ENCODE measurements at regions of chr5 and their contacts with region 1.

Region 1: DNA sequence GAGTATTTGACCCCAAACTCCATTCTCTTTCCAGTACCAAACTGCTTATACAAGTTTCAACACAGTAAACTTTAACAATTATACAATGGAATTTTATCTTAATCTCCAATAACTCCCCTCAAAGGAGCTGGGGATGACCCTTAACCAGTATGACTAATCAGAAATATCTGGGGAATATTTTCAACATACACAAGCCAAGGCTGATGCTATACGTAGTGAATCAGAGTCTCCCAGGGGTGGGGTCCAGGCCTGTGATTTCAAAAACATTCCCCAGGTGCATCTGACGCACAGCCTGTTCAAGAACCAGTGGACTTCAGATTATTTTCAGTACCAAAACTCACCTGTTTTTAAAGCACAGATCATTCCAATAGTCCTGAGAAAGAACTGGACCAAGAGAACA is 11.8 kb upstream of the SEMA5A start:
- DNase-seq: no peak
- ATAC-seq: no peak
- H3K4me3 ChIP-seq: no peak overlapping the region
- H3K27ac ChIP-seq: no peak overlapping the region
- H3K4me1 ChIP-seq: no peaks in the 10 kb centered on the region
- H3K27me3 ChIP-seq: no peaks in the 10 kb centered on the region
- CTCF ChIP-seq: no peak

Region 2: GRCh38 chr5:9468060-9468388 is 89.7 kb before region 1 on chr5:
- intact Hi-C with region 1: no loop called
- DNase-seq: no peak
- ATAC-seq: no peak
- H3K4me3 ChIP-seq: no peak overlapping the region
- H3K27ac ChIP-seq: no peak overlapping the region
- H3K4me1 ChIP-seq: peaks cover 0 to 21% (median 5%) of the 10 kb centered on the region in 9 donors
- H3K27me3 ChIP-seq: no peaks in the 10 kb centered on the region
- CTCF ChIP-seq: no peak

Region 3: GRCh38 chr5:9653811-9654210 is 96.1 kb after region 1 on chr5:
- intact Hi-C with region 1: no loop called
- DNase-seq: peak; percentile 70 to 77
- ATAC-seq: peak; percentile 84 to 99 (median 92)
- H3K4me3 ChIP-seq: no peak overlapping the region
- H3K27ac ChIP-seq: peak overlapping the region in 5 of 10 donors; percentile 76 to 86 (median 82)
- H3K4me1 ChIP-seq: peaks cover 0 to 27% (median 0%) of the 10 kb centered on the region in 9 donors
- H3K27me3 ChIP-seq: no peaks in the 10 kb centered on the region
- CTCF ChIP-seq: no peak

Region 4: DNA sequence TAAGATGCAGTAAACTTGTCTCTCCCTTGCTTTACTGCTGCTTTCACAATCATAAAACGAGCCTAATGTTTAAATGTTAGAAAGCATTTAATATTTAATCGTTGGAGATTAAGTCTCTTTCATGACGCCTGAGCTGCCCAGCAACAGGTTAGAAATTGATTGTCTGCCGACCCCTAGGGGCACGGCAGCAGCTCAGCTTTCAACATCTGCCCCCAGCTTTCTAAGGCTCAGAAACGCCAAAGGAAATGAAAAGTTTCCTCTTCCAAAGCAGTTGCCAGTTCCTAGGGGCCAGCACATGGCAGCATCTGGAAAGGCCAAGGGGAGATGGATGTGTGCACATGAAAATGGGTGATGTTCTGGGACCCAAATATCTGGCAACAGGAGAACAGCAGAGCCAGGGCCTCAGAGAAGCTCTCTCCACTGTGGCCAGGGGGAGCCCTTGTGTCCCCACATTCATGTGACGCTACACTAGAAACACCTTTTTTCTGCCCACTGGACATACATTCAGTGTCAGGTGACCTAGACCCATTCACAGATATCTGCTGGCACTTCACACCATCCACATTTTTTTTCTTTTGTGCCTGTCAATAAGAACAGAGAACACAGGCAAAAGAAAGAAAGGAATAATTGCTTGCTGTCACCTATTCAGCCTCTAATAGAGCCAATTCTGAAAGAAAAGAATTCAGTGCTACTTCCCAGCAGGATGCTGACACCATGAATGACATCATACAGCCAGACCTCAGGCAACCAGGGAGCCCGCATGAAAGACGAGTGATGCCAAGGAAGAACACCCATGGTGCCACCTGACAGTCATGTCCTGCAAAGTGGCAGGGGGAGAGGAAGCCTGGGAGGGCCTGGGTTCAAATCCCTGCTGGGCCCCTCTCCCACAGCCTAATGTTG is 277.4 kb after region 1 on chr5:
- intact Hi-C with region 1: loop called in 1 of 10 experiments (anchors 10 kb)
- DNase-seq: no peak
- ATAC-seq: peak in 1 of 8 donors; percentile 34
- H3K4me3 ChIP-seq: no peak overlapping the region
- H3K27ac ChIP-seq: no peak overlapping the region
- H3K4me1 ChIP-seq: no peaks in the 10 kb centered on the region
- H3K27me3 ChIP-seq: peaks cover 0 to 3% (median 0%) of the 10 kb centered on the region in 7 donors
- CTCF ChIP-seq: peak in 6 of 9 donors; percentile 7 to 42 (median 19)

Measured in heart right ventricle (tissue), 16 donors.